ENCODE measurements at regions of chr21 and their contacts with region 1.

Region 1: DNA sequence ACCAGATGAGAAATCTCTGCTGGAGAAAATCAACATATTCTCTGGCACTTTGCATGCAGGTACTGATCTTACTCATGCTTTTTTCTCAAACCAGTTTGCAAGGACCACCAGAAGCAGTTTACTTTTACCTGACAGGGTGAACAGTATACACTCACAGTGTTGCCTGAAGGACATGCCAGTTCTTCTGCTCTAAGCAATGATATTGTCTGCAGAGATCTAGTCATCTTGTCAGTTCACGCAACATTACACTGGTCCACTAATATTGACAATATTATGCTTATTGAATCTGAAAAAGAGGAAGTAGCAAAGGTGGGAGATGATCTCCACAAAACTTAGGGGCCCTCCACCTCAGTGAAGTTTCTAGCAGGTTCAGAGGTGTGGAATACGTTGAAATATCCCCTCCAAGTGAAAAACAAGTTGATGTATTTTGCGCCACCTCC is 3.8 kb upstream of the S100B start:
- DNase-seq: no peak
- H3K4me3 ChIP-seq: no peak overlapping the region
- H3K27ac ChIP-seq: no peak overlapping the region
- H3K4me1 ChIP-seq: peaks cover 0 to 8% (median 3%) of the 10 kb centered on the region in 4 donors
- H3K27me3 ChIP-seq: no peaks in the 10 kb centered on the region
- CTCF ChIP-seq: no peak
- EP300 ChIP-seq: no peak
- POLR2A ChIP-seq: no peak

Region 2: DNA sequence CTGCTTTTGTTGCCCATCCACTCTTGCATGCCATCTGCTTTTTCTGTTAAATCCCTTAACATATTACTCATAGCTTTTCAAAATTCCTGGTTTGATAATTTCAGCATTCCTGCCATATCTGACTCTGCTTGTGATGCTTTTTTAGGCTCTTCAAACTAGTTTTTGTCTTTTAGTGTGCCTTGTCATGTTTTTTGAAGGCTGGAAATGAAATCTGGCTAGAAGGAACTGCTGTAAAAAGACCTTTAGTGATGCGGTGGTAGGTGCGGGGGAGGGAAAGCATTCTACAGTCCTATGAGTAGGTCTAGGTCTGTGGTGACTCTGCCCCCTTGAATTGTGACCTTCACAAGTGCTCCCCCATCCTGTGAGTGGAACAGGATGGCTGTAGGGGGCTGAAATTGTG is 11.2 kb after region 1 on chr21:
- in situ Hi-C with region 1: no loop called
- intact Hi-C with region 1: loop called (anchors 1 kb)
- DNase-seq: no peak
- H3K4me3 ChIP-seq: no peak overlapping the region
- H3K27ac ChIP-seq: no peak overlapping the region
- H3K4me1 ChIP-seq: peaks cover 0 to 17% (median 0%) of the 10 kb centered on the region in 4 donors
- H3K27me3 ChIP-seq: peaks cover 4% of the 10 kb centered on the region
- CTCF ChIP-seq: no peak
- EP300 ChIP-seq: no peak
- POLR2A ChIP-seq: no peak

Measured in transverse colon (tissue), 4 donors.